MCF 10A (cell line): ENCODE measurements at regions of chr5 and their contacts with region 1.

Region 1: DNA sequence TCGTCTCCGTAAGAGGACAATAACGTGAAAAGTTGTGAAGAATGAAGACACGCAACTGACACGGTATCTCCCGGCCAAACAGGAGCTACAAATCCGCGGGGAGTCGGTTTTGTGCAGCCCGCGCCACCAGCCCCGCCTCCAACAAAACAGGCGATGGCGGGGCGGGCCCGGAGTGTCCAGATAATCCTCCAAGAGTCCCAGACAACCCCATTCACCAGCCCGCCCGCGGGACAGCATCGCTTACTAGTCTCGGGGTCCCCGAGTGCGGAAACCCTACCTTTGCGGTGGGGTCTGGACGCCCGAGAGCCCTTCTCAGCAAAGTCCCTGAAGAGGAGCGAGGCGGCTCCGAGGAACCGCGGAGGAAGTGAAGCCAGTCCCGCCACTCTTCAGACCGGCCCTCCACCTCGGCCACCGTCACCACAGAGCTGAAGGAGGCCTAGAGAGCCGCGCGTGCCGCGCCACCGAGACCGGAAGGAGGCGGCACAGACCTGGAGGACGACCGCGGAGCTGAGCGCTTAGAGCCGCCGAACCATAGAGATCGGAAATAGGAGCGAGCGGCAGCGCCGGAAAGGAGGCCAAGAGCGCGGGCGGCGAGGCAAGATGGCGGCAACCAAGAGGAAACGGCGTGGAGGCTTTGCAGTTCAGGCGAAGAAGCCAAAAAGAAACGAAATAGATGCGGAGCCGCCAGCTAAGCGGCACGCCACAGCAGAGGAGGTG is at the starts of genes BRIX1 and RAD1:
- DNase-seq: peak; percentile 97
- H3K4me3 Mint-ChIP-seq: no peak within 1 kb of the TSS
- H3K27ac Mint-ChIP-seq: no peak within 1 kb of the TSS
- H3K4me1 Mint-ChIP-seq: peaks cover 12% of the 10 kb centered on the region
- H3K27me3 Mint-ChIP-seq: no peaks in the 10 kb centered on the region
- CTCF ChIP-seq: no peak
- total RNA-seq, gene BRIX1: 36.0 and 50.8 TPM in 2 replicates
- total RNA-seq, gene RAD1: 16.7 and 17.2 TPM in 2 replicates

Region 2: DNA sequence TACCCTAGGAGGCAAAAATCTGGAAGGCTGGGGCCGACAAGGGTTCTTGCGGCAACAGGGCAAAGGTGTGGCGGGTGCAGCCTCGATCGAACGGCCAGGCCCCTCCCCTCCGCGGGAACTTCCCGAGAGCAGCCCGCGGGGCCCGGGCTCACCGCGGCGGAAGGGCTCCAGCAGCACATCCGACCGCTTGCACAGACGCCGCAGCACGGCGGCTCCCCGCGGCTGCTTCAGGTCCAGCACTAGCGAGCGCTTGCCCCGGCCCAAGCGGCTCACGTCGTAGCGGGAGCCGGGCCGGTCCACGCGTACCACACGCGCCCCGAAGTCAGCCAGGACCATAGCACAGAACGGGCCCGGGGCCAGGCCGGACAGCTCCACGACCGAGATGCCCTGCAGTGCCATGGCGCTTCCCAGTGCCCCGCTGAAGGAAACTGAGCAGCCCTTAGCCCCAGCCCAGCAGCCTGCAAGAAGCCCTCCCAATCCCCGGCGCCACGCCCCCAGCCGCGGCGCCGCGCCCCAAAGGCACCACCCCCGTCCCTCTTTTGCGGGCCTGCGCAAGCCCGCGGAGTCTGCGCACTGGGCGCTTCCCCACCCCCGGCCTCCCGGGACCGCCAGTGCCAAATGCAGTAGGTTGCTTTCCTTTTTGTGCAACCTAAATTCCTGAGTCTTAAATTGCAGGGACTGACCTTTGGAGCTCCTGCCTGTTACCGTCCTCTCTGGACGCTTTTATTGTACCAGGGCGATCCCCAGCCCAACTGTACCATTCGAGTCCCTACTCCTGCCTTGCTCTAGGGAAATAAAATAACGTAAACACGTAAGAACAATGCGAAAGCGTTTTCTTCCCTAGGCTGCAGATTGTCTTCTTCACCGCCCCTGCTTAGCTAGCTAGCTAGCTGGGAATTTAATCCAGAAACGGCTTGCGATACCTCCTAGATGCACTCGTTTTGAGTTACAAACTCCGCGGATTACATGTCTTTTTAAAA is 907.4 kb before region 1 on chr5 and contains the start of gene AMACR:
- CTCF ChIA-PET with region 1: no interaction called
- POLR2A ChIA-PET with region 1: interaction called, 10 read pairs
- intact Hi-C with region 1: no loop called
- DNase-seq: peak; percentile 89
- H3K4me3 Mint-ChIP-seq: peak within 1 kb of the TSS; percentile 75
- H3K27ac Mint-ChIP-seq: peak within 1 kb of the TSS; percentile 57
- H3K4me1 Mint-ChIP-seq: peaks cover 13% of the 10 kb centered on the region
- H3K27me3 Mint-ChIP-seq: no peaks in the 10 kb centered on the region
- CTCF ChIP-seq: no peak
- total RNA-seq, gene AMACR: 6.6 and 7.9 TPM in 2 replicates

Region 3: GRCh38 chr5:34486160-34486848 is 429.0 kb before region 1 on chr5:
- CTCF ChIA-PET with region 1: interaction called, 12 read pairs
- POLR2A ChIA-PET with region 1: interaction called, 13 read pairs
- intact Hi-C with region 1: no loop called
- DNase-seq: peak; percentile 91
- H3K4me3 Mint-ChIP-seq: no peak overlapping the region
- H3K27ac Mint-ChIP-seq: no peak overlapping the region
- H3K4me1 Mint-ChIP-seq: peaks cover 29% of the 10 kb centered on the region
- H3K27me3 Mint-ChIP-seq: peaks cover 4% of the 10 kb centered on the region
- CTCF ChIP-seq: peak; percentile 74

Region 4: GRCh38 chr5:34608859-34609648 is 306.2 kb before region 1 on chr5:
- CTCF ChIA-PET with region 1: no interaction called
- POLR2A ChIA-PET with region 1: no interaction called
- intact Hi-C with region 1: loop called (anchors 2 kb)
- DNase-seq: peak; percentile 89
- H3K4me3 Mint-ChIP-seq: peak overlapping the region; percentile 32
- H3K27ac Mint-ChIP-seq: peak overlapping the region; percentile 56
- H3K4me1 Mint-ChIP-seq: peaks cover 14% of the 10 kb centered on the region
- H3K27me3 Mint-ChIP-seq: no peaks in the 10 kb centered on the region
- CTCF ChIP-seq: no peak

Region 5: GRCh38 chr5:34838785-34839714 is 76.2 kb before region 1 on chr5 and contains the start of gene TTC23L:
- CTCF ChIA-PET with region 1: interaction called, 3 read pairs
- POLR2A ChIA-PET with region 1: interaction called, 16 read pairs
- intact Hi-C with region 1: no loop called
- DNase-seq: peak; percentile 89
- H3K4me3 Mint-ChIP-seq: peak within 1 kb of the TSS; percentile 88
- H3K27ac Mint-ChIP-seq: peak within 1 kb of the TSS; percentile 92
- H3K4me1 Mint-ChIP-seq: peaks cover 11% of the 10 kb centered on the region
- H3K27me3 Mint-ChIP-seq: no peaks in the 10 kb centered on the region
- CTCF ChIP-seq: no peak
- total RNA-seq, gene TTC23L: 0.14 and 0.69 TPM in 2 replicates

Region 6: DNA sequence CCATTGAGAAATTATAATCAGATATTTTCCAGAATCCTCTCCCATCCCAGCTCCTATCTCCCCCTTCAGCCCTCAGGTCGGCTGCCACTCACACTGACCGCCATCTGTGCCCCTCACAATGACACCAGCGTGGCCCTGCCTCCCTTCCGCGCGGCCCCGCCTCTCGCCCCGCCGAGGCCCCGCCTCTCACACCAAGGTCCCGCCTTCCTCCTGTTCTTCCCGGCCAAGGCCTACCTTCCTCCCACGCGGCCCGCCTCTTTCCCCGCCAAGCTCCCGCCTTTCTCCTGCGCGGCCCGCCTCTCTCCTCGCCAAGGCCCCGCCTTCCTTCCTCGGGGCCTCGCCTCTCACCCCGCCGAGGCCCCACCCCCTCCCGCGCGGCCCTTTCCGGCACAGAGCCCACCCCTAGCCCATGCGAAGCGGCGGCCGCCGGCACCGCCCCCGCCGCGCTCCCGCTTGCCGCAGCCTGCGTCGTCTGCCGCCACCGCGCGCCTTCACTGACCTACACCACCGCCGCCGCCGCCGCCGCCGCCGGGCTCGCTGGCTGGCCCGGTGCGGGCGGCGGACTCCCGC is 13.9 kb after region 1 on chr5 and contains the start of gene DNAJC21:
- CTCF ChIA-PET with region 1: interaction called, 13 read pairs
- POLR2A ChIA-PET with region 1: interaction called, 157 read pairs
- intact Hi-C with region 1: loop called (anchors 2 kb)
- DNase-seq: peak; percentile 98
- H3K4me3 Mint-ChIP-seq: peak within 1 kb of the TSS; percentile 99
- H3K27ac Mint-ChIP-seq: peak within 1 kb of the TSS; percentile 98
- H3K4me1 Mint-ChIP-seq: peaks cover 14% of the 10 kb centered on the region
- H3K27me3 Mint-ChIP-seq: no peaks in the 10 kb centered on the region
- CTCF ChIP-seq: no peak
- total RNA-seq, gene DNAJC21: 62.3 and 64.6 TPM in 2 replicates